Activated naive CD8-positive, alpha-beta T cell treated with anti-CD3 and anti-CD28 coated beads, Interleukin-2, amount 10 ng/mL, durations not matched to agents 7 days and 5 days (primary cell): ENCODE measurements at regions of chr17 and their contacts with region 1.

Region 1: DNA sequence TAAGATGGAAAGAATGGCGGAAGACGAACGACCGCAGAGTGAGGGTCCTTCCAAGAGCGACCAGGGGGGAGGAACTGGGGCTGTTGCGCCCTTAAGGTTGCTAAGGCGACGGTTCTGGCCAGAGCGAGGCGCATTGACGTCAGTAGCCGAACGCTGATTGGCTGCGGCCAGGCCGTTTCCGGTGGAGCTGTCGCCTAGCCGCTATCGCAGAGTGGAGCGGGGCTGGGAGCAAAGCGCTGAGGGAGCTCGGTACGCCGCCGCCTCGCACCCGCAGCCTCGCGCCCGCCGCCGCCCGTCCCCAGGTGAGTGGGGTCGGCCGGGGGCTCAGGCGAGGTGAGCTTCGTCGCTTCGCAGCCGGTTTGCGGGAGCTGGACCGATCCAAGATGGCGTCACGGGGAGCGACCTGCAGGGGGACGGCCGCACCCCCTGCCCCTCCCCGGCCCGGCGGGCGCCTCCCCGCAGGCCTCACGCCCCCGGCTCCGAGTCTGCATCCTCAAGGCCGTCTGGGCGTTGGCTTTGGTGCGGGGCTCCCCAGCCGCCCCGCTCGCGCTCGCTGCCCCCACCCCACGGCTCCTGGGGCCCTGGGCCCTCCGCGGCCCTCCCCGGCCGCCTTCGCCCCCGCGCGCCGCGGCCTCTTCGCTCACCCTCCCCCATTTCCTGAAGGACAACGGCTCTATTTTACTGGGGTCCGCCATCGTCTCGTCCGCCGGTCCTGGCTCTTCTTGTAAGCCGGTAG is at the start of gene PRKAR1A:
- DNase-seq: peak; percentile 94
- ATAC-seq: peak; percentile 83
- H3K4me3 Mint-ChIP-seq: peak within 1 kb of the TSS; percentile 100
- H3K27ac Mint-ChIP-seq: peak within 1 kb of the TSS; percentile 100
- H3K4me1 Mint-ChIP-seq: peaks cover 45% of the 10 kb centered on the region
- H3K27me3 Mint-ChIP-seq: no peaks in the 10 kb centered on the region
- total RNA-seq, gene PRKAR1A: 208 to 226 TPM

Region 2: DNA sequence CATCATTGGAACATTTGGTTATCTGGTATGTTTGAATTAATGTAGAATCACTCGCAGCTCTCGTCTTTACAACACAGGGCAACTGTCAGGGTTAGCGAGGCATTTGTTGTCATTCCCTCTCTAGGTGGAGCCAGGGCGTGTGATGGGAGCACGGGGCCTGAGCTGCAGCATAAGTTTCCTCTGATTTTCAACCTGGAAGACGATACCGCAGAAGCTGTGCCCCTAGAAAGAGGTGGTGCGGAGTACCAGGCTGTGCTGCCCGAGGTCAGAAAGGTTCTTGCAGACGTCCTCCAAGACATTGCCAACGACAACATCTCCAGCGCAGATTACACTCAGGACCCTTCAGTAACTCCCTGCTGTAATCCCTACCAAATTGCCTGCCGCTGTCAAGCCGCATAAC is 92.3 kb before region 1 on chr17:
- POLR2A ChIA-PET with region 1: no interaction called
- DNase-seq: no peak
- ATAC-seq: no peak
- H3K4me3 Mint-ChIP-seq: no peak overlapping the region
- H3K27ac Mint-ChIP-seq: no peak overlapping the region
- H3K4me1 Mint-ChIP-seq: peaks cover 9% of the 10 kb centered on the region
- H3K27me3 Mint-ChIP-seq: no peaks in the 10 kb centered on the region

Region 3: DNA sequence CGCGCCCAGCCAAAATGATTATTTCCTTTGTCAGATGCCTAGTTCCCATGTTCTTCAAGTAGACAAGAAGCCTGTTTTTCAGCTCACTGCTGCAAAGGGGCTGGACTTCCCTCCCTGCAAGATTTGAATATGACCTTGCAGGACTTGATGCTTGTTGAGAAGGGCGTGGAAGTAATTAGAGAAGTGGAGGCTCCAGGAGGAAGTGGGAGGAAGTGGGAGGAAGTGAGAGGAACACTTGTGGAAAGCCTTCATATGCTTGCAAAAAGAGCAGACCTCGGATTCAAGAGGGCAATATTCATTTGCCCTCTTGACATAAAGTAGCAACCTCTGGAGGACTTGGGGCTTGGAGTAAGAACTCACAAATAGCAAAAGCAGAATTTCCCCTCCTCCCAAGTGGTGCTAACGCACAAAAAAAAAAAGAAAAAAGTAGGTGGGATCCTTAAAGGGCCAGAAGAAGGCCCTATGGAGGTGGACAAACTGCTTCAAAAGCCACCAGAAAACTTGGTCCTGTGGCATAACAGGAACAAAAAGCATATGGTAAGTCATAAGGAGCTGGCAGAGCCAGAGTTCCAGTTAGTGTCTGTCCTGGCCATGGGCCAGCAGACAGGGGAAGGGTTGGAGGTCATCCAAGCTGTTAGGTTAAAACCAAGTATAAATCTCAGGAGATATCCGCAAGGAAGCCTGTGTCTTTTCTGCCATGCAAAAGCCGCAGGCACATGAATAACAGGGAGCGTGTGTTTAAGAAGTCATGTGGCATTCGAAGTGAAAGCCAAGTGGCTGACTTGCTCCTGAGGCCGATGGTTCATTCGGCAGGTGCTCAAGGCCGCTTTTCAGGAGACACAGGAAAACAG is 20.8 kb before region 1 on chr17:
- POLR2A ChIA-PET with region 1: interaction called, 43 read pairs
- DNase-seq: no peak
- ATAC-seq: no peak
- H3K4me3 Mint-ChIP-seq: no peak overlapping the region
- H3K27ac Mint-ChIP-seq: no peak overlapping the region
- H3K4me1 Mint-ChIP-seq: peaks cover 17% of the 10 kb centered on the region
- H3K27me3 Mint-ChIP-seq: peaks cover 13% of the 10 kb centered on the region

Region 4: DNA sequence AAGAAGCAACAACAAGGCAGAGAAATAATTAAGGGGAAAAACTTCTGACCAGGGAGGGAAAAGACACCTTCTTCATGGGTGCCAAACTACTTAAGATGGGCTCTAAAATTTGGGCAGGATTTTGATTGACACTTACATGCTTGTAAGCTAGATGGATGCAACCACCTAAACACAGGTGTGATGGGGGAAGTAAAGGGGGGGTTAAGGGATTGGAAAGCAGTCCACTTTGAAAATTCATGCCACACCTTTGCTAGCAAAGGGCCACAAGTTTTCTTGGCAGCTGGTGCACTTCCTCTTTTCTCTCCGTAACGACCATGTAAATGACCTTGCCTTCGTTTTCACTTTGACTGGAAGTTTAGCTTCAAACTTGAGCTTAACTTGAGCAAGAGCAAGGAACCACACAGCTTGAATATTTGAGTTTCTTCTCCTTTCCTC is 14.5 kb before region 1 on chr17:
- POLR2A ChIA-PET with region 1: interaction called, 17 read pairs
- DNase-seq: no peak
- ATAC-seq: peak; percentile 41
- H3K4me3 Mint-ChIP-seq: peak overlapping the region; percentile 59
- H3K27ac Mint-ChIP-seq: peak overlapping the region; percentile 84
- H3K4me1 Mint-ChIP-seq: peaks cover 26% of the 10 kb centered on the region
- H3K27me3 Mint-ChIP-seq: peaks cover 7% of the 10 kb centered on the region

Region 5: DNA sequence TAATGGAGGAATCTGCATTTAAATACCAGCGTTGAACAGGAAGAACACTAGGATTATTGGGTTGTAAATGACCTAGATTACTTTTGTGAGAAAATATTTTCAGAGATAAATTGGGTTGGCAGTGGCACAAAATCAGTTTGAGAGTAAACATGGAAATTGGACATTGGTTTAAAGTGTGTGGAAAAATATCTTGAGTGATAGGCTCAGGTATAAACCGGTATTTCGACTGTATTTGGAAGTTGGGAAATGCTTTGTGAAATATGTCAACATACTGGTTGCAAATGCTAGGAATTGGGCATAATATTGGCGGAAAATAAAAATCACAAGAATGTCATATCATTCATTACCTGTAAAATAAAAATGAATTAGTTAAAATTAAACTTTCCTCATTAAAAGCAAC is 14.9 kb after region 1 on chr17:
- POLR2A ChIA-PET with region 1: no interaction called
- DNase-seq: no peak
- ATAC-seq: no peak
- H3K4me3 Mint-ChIP-seq: no peak overlapping the region
- H3K27ac Mint-ChIP-seq: no peak overlapping the region
- H3K4me1 Mint-ChIP-seq: peaks cover 5% of the 10 kb centered on the region
- H3K27me3 Mint-ChIP-seq: no peaks in the 10 kb centered on the region